Colonic mucosa (tissue), 4 donors: ENCODE measurements at regions of chr1 and their contacts with region 1.

Region 1: DNA sequence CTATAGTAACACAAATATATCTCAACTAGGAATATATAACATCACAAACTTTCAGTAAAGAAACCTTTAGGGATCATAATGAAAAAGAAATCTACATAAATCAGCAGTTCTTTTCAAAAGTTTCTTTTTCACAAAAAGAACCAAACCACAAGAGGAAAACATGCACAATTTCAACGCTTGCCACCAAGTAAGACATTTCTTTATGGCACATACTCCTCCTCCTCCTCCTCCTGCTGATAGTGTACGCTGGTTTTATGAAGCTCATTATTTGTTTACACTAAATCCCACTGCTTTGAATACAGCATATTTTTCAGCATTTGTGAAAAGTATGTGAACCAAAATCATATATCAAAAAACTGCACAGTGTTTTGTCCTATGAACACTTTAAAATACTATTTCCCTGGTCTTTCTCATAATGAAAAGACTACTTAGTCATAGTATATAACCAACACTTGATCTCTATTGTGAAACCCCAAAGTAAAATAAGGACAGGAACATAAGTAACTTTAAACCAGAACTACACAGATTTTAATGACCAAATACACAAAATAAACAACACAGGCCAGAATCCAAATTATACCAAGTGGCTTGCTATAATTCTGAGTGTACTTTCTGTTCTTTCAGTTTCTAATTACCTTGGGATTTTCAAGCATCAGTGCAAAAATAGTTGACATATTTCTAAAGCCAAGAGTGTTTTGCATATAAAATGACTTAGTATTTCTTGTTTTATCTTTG is 184.2 kb downstream of the EIF4G3 start:
- DNase-seq: no peak
- H3K4me3 ChIP-seq: no peak overlapping the region
- H3K27ac ChIP-seq: no peak overlapping the region
- H3K4me1 ChIP-seq: no peaks in the 10 kb centered on the region
- H3K27me3 ChIP-seq: no peaks in the 10 kb centered on the region
- CTCF ChIP-seq: no peak

Region 2: DNA sequence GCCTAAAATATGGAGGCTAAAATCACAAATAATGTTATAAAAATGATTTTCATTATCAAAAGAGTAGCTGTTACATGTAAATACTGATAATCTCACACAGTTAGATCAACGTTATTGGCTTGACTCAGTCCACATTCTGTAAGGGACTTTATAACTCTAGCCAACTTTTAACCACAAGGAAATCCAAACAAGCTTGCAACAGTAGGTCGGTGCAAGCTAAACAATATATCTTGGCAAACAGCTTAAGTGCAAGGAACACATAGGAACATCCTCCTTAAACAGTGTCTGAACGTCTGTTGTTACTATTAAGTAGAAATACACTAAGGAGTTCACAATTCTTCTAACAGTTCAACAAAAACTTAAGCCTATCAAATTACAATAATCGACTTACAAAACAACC is 57.5 kb after region 1 on chr1:
- intact Hi-C with region 1: loop called (anchors 10 kb)
- DNase-seq: no peak
- H3K4me3 ChIP-seq: no peak overlapping the region
- H3K27ac ChIP-seq: no peak overlapping the region
- H3K4me1 ChIP-seq: peaks cover 6% of the 10 kb centered on the region
- H3K27me3 ChIP-seq: no peaks in the 10 kb centered on the region
- CTCF ChIP-seq: no peak